Tibial artery (tissue), 4 donors: ENCODE measurements at regions of chr6 and their contacts with region 1.

Region 1: GRCh38 chr6:72619883-72620696 is 1.8 kb upstream of the KCNQ5 start:
- DNase-seq: peak; percentile 41 to 78
- H3K4me3 ChIP-seq: peak overlapping the region; percentile 63 to 76
- H3K27ac ChIP-seq: peak overlapping the region; percentile 75 to 79
- H3K4me1 ChIP-seq: peaks cover 0 to 25% (median 12%) of the 10 kb centered on the region in 4 donors
- H3K27me3 ChIP-seq: no peaks in the 10 kb centered on the region
- CTCF ChIP-seq: no peak

Region 2: DNA sequence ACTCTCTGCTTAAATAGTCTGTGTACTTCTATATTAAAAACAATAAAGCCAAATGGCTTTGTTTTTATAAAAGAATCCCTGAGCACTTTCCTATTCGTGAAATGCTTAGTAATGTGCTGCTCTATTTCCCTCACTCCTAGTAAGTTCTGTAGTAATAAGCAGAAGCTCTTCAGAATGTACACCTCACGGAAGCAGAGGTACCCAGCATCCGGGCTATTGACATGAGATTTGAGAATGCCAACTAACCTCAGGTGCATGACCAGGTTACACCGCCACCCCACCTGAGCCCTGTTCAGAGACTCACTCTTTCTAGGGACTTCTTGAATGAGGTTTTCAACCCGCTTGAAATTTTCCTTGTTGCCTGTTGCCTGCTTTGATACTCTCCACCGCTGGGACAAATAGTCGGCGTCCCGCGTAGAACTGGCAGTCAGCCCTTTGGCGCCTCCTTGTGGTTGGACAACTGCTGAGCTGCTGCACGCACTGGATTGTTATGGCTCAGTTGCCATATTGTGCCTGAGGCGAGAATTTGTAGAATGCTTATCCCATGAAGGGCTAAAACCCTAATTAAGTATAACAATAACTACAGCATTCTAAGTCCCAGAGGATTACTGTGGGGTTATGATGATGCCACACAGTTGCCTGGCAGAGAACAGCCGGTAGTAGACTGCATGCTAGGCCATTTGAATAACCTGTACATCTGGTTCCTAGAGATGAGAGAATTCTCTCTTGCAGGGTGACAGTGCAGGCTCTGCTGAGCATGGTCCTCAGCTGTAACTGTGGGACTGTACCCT is 509.8 kb after region 1 on chr6:
- intact Hi-C with region 1: loop called (anchors 5 kb)
- DNase-seq: peak; percentile 74 to 86
- H3K4me3 ChIP-seq: no peak overlapping the region
- H3K27ac ChIP-seq: no peak overlapping the region
- H3K4me1 ChIP-seq: peaks cover 0 to 10% (median 0%) of the 10 kb centered on the region in 4 donors
- H3K27me3 ChIP-seq: no peaks in the 10 kb centered on the region
- CTCF ChIP-seq: peak; percentile 95 to 99